ENCODE measurements at regions of chr14 and their contacts with region 1.

Region 1: DNA sequence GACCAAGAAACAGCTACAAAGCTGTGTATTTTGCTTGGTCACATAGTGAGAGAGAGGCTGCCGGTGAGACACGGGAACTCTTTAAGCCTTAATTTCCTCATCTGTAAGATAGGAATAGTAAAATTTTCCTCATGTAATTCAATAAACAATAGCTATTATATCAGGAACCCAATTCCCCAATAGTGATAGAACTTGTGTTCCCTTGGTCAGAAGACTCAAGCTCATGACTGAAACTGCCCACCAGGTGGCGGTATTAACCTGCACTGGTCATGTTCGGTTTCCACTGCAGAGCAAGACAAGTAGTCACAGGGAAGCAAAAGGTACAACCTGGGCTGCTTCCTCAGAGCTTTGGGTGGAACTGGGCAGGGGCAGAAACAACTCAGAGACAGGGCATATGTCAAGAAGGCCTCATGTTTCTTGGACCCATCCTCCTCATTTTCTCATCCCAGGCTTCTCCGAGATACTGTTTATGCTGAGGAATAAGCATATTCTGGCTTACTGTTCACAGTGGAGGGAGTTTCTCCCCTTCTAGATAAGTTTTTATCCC is 4.2 kb upstream of the AJUBA start:
- DNase-seq: peak; percentile 74
- ATAC-seq: peak; percentile 58
- H3K4me3 ChIP-seq: no peak overlapping the region
- H3K27ac ChIP-seq: no peak overlapping the region
- H3K4me1 ChIP-seq: no peaks in the 10 kb centered on the region
- H3K27me3 ChIP-seq: no peaks in the 10 kb centered on the region
- CTCF ChIP-seq: peak; percentile 87

Region 2: DNA sequence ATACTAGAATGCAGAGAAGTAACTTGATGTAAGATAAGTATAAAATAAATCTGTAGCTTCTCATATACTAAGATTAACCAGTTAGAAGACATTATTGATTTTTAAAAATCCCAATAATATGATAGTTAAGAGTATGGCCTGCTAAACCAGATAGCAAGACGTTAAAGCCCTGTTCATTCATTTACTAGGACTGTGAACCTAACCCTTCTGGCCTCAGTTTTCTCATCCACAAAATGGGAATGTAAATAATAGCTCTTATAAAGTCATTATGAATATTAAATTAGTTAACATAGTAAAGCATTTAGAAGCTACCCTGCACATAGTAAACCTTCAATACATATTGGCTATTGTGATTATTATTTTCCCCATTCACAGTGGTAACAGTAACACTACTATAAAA is 51.4 kb before region 1 on chr14:
- CTCF ChIA-PET with region 1: no interaction called
- POLR2A ChIA-PET with region 1: no interaction called
- in situ Hi-C with region 1: no loop called
- intact Hi-C with region 1: no loop called
- DNase-seq: no peak
- ATAC-seq: no peak
- H3K4me3 ChIP-seq: no peak overlapping the region
- H3K27ac ChIP-seq: no peak overlapping the region
- H3K4me1 ChIP-seq: no peaks in the 10 kb centered on the region
- H3K27me3 ChIP-seq: no peaks in the 10 kb centered on the region
- CTCF ChIP-seq: no peak

Region 3: GRCh38 chr14:22973217-22974032 is 13.2 kb before region 1 on chr14:
- CTCF ChIA-PET with region 1: interaction called, 13 read pairs
- POLR2A ChIA-PET with region 1: interaction called, 5 read pairs
- in situ Hi-C with region 1: no loop called
- intact Hi-C with region 1: no loop called
- DNase-seq: no peak
- ATAC-seq: peak; percentile 66
- H3K4me3 ChIP-seq: no peak overlapping the region
- H3K27ac ChIP-seq: no peak overlapping the region
- H3K4me1 ChIP-seq: peaks cover 23% of the 10 kb centered on the region
- H3K27me3 ChIP-seq: no peaks in the 10 kb centered on the region
- CTCF ChIP-seq: peak; percentile 74

Region 4: GRCh38 chr14:23052182-23052623 is 65.6 kb after region 1 on chr14:
- CTCF ChIA-PET with region 1: interaction called, 21 read pairs
- POLR2A ChIA-PET with region 1: no interaction called
- in situ Hi-C with region 1: no loop called
- intact Hi-C with region 1: no loop called
- DNase-seq: no peak
- ATAC-seq: peak; percentile 68
- H3K4me3 ChIP-seq: no peak overlapping the region
- H3K27ac ChIP-seq: no peak overlapping the region
- H3K4me1 ChIP-seq: peaks cover 3% of the 10 kb centered on the region
- H3K27me3 ChIP-seq: no peaks in the 10 kb centered on the region
- CTCF ChIP-seq: peak; percentile 84

Region 5: GRCh38 chr14:23057757-23058653 is 71.4 kb after region 1 on chr14:
- CTCF ChIA-PET with region 1: interaction called, 16 read pairs
- POLR2A ChIA-PET with region 1: interaction called, 13 read pairs
- in situ Hi-C with region 1: no loop called
- intact Hi-C with region 1: loop called (anchors 1 kb)
- DNase-seq: peak; percentile 70
- ATAC-seq: peak; percentile 83
- H3K4me3 ChIP-seq: peak overlapping the region; percentile 51 to 55
- H3K27ac ChIP-seq: peak overlapping the region; percentile 59; the same call in 1 of the 2 replicates
- H3K4me1 ChIP-seq: peaks cover 15% of the 10 kb centered on the region
- H3K27me3 ChIP-seq: no peaks in the 10 kb centered on the region
- CTCF ChIP-seq: peak; percentile 93

Region 6: DNA sequence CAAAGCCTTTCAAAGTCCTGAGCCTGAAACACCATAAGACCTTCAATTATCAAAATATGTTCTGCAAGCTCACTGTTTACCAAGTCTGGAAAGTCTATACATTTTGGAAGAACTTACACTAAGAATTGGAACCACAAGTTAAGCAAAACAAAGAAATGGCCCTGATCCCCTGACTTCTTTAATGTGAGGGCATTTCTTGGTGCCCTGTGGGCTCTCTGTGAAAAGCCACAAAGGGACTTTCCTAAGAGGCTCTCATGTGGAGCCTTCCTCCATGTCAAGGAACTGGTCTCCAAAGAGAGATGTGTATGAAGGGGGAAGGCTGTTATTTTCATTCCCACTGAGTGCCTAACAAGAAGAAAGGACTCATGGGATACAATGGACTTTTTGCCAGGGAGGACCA is 435.0 kb after region 1 on chr14:
- CTCF ChIA-PET with region 1: no interaction called
- POLR2A ChIA-PET with region 1: no interaction called
- in situ Hi-C with region 1: no loop called
- intact Hi-C with region 1: no loop called
- DNase-seq: no peak
- ATAC-seq: no peak
- H3K4me3 ChIP-seq: no peak overlapping the region
- H3K27ac ChIP-seq: no peak overlapping the region
- H3K4me1 ChIP-seq: no peaks in the 10 kb centered on the region
- H3K27me3 ChIP-seq: no peaks in the 10 kb centered on the region
- CTCF ChIP-seq: no peak

Measured in Panc1 (cell line).